Heart left ventricle (tissue), 16 donors: ENCODE measurements at regions of chr14 and their contacts with region 1.

Region 1: DNA sequence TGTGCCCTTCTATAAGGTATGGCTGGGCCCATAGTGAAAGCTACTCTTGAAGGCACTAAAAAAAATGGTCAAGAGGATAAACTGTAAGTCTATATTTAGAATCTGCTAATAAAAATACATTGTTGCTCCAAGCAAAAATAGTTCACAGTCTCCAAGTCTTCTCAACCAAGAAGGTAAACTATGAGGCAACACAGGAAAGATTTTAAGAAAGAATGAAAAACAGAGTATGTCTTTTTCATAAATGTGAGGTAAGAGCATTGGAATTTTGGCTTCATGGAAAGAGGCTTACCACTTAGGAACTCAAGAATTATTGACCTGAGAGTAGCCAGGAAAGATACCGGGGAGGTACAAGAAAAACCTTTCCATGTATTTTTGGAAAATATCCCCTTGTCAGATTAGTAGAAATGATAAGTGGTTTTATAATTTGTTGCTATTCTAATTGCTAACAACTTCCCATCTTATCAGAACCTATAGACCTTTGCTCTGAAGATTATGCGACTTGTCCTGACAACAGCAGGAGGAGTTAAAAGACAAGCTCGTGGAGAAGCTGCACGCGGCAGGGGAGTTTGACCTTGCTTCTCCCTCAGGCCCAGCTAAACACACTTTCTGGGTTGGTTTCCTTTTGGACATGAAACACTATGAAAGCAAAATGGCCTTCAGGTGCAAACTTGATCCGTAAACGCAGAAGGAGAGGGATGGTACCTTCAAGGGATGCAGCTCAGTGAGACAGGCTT is 238.1 kb downstream of the FOXN3 start:
- DNase-seq: no peak
- ATAC-seq: no peak
- H3K4me3 ChIP-seq: no peak overlapping the region
- H3K27ac ChIP-seq: peak overlapping the region in 2 of 12 donors; percentile 19 to 38
- H3K4me1 ChIP-seq: peaks cover 0 to 43% (median 27%) of the 10 kb centered on the region in 12 donors
- H3K27me3 ChIP-seq: no peaks in the 10 kb centered on the region
- CTCF ChIP-seq: no peak
- POLR2A ChIP-seq: no peak

Region 2: GRCh38 chr14:89293314-89293916 is 114.4 kb after region 1 on chr14:
- intact Hi-C with region 1: no loop called
- DNase-seq: no peak
- ATAC-seq: peak in 2 of 4 donors; percentile 8
- H3K4me3 ChIP-seq: no peak overlapping the region
- H3K27ac ChIP-seq: peak overlapping the region in 8 of 12 donors; percentile 21 to 50 (median 36)
- H3K4me1 ChIP-seq: peaks cover 0 to 38% (median 21%) of the 10 kb centered on the region in 12 donors
- H3K27me3 ChIP-seq: no peaks in the 10 kb centered on the region
- CTCF ChIP-seq: no peak
- POLR2A ChIP-seq: no peak

Region 3: GRCh38 chr14:89303457-89304435 is 124.8 kb after region 1 on chr14:
- intact Hi-C with region 1: loop called in 2 of 10 experiments (anchors 5 to 10 kb)
- DNase-seq: peak in 4 of 5 donors; percentile 54 to 76 (median 68)
- ATAC-seq: peak; percentile 79 to 89 (median 85)
- H3K4me3 ChIP-seq: peak overlapping the region in 9 of 12 donors; percentile 13 to 38 (median 29)
- H3K27ac ChIP-seq: peak overlapping the region; percentile 63 to 95 (median 91)
- H3K4me1 ChIP-seq: peaks cover 10 to 63% (median 43%) of the 10 kb centered on the region in 12 donors
- H3K27me3 ChIP-seq: no peaks in the 10 kb centered on the region
- CTCF ChIP-seq: no peak
- POLR2A ChIP-seq: no peak

Region 4: GRCh38 chr14:89336338-89336737 is 157.4 kb after region 1 on chr14:
- intact Hi-C with region 1: no loop called
- DNase-seq: no peak
- ATAC-seq: no peak
- H3K4me3 ChIP-seq: no peak overlapping the region
- H3K27ac ChIP-seq: no peak overlapping the region
- H3K4me1 ChIP-seq: peaks cover 0 to 45% (median 35%) of the 10 kb centered on the region in 12 donors
- H3K27me3 ChIP-seq: no peaks in the 10 kb centered on the region
- CTCF ChIP-seq: no peak
- POLR2A ChIP-seq: no peak